IMR-90 (cell line): ENCODE measurements at regions of chr1 and their contacts with region 1.

Region 1: GRCh38 chr1:161824618-161825017 is 58.5 kb downstream of the ATF6 start:
- DNase-seq: no peak
- ATAC-seq: no peak
- H3K4me3 ChIP-seq: no peak overlapping the region
- H3K27ac ChIP-seq: no peak overlapping the region
- H3K4me1 ChIP-seq: no peaks in the 10 kb centered on the region; the same call in 1 of the 2 replicates
- H3K27me3 ChIP-seq: no peaks in the 10 kb centered on the region
- CTCF ChIP-seq: no peak
- POLR2A ChIP-seq: no peak
- RAD21 ChIP-seq: no peak

Region 2: DNA sequence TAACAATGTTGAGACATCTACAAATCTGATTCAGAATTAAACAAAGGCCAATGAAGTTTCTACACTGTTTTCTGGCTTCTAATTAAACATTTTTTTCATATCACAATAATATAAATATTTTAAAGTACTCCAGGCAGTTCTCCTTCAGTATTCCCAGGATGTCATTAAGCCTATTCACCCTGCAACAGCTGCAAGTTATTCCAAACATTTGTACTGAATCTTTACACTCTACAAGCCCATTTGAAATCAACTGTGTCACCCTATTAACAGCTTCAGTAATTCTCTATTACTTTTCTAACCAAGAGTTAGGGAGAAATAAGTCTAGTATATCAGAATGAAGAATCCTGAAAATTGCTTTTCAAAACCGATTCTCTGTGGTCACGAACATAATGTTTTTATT is 74.5 kb after region 1 on chr1:
- CTCF ChIA-PET with region 1: no interaction called
- POLR2A ChIA-PET with region 1: interaction called, 11 read pairs
- dilution Hi-C with region 1: no loop called
- in situ Hi-C with region 1: no loop called
- intact Hi-C with region 1: no loop called
- DNase-seq: no peak
- ATAC-seq: peak; percentile 49
- H3K4me3 ChIP-seq: no peak overlapping the region
- H3K27ac ChIP-seq: no peak overlapping the region
- H3K4me1 ChIP-seq: no peaks in the 10 kb centered on the region
- H3K27me3 ChIP-seq: no peaks in the 10 kb centered on the region
- CTCF ChIP-seq: no peak
- POLR2A ChIP-seq: no peak
- RAD21 ChIP-seq: no peak